ENCODE measurements at regions of chr15 and their contacts with region 1.

Region 1: DNA sequence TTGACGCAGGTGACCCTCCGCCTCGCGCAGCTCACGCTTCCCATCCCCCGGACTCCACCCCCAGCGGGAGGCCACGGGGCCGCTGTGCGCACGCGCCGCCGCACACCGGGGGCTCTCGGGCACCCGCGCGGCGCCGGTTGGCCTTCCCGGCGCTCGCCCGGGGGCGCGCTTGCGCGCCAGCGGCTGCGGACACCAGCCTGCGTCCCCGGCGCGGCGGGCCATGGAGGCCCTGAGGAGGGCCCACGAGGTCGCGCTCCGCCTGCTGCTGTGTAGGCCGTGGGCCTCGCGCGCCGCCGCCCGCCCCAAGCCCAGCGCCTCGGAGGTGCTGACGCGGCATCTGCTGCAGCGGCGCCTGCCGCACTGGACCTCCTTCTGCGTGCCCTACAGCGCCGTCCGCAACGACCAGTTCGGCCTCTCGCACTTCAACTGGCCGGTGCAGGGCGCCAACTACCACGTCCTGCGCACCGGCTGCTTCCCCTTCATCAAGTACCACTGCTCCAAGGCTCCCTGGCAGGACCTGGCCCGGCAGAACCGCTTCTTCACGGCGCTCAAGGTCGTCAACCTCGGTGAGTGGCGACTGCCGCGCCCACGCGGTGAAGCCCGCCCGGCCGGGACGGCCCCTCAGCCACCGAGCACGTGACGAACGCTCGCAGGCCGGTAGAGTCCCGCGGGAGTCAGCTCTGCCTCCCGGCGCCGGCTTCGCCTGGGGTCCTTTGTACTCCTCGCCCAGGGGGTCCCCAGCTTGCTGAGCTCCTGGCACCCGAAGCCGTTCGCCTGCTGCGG is at the start of gene C15orf61:
- DNase-seq: peak; percentile 62 to 79 (median 73)
- H3K4me3 ChIP-seq: peak within 1 kb of the TSS; percentile 66 to 88 (median 67)
- H3K4me3 Mint-ChIP-seq: peak within 1 kb of the TSS; percentile 91 to 92
- H3K27ac ChIP-seq: peak within 1 kb of the TSS; percentile 90 to 98
- H3K27ac Mint-ChIP-seq: peak within 1 kb of the TSS; percentile 95 to 97 (median 96)
- H3K4me1 ChIP-seq: peaks cover 26 to 44% of the 10 kb centered on the region in 2 donors
- H3K4me1 Mint-ChIP-seq: peaks cover 28% of the 10 kb centered on the region
- H3K27me3 ChIP-seq: no peaks in the 10 kb centered on the region
- H3K27me3 Mint-ChIP-seq: no peaks in the 10 kb centered on the region
- CTCF ChIP-seq: no peak
- polyA plus RNA-seq, gene C15orf61: 3.2 to 3.9 (median 3.6) TPM

Region 2: DNA sequence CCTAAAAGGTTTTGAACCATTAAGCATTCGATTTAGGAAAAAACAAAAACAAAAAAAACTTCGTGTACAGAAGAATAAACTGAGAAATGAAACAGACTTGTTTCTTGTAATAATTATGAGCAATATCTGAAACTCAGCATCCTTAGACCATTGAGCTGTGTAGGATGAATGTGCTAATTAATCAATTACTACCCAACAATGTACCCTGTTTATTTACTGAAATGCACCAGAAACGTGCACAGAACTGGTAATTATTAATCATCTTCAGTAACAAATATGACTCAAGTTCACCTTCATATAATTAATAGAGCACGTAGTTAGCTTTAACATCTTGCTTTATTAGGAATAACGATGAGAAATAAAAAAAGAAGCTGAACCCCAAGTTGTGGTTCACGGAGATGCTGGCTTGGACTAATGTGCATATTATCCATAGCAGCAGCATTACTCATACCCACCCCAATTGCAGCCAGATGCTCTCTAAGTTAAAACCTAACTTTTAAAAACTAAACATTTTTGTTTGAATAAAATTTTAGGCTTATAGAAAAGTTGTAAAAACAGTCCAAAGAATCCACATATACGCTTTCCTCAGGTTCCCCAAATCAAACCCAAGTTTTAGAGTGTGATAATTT is 10.5 kb before region 1 on chr15:
- intact Hi-C with region 1: no loop called
- DNase-seq: no peak
- H3K4me3 ChIP-seq: no peak overlapping the region
- H3K4me3 Mint-ChIP-seq: no peak overlapping the region
- H3K27ac ChIP-seq: no peak overlapping the region
- H3K27ac Mint-ChIP-seq: no peak overlapping the region
- H3K4me1 ChIP-seq: peaks cover 20 to 21% of the 10 kb centered on the region in 2 donors
- H3K4me1 Mint-ChIP-seq: peaks cover 27% of the 10 kb centered on the region
- H3K27me3 ChIP-seq: no peaks in the 10 kb centered on the region
- H3K27me3 Mint-ChIP-seq: no peaks in the 10 kb centered on the region
- CTCF ChIP-seq: no peak

Region 3: DNA sequence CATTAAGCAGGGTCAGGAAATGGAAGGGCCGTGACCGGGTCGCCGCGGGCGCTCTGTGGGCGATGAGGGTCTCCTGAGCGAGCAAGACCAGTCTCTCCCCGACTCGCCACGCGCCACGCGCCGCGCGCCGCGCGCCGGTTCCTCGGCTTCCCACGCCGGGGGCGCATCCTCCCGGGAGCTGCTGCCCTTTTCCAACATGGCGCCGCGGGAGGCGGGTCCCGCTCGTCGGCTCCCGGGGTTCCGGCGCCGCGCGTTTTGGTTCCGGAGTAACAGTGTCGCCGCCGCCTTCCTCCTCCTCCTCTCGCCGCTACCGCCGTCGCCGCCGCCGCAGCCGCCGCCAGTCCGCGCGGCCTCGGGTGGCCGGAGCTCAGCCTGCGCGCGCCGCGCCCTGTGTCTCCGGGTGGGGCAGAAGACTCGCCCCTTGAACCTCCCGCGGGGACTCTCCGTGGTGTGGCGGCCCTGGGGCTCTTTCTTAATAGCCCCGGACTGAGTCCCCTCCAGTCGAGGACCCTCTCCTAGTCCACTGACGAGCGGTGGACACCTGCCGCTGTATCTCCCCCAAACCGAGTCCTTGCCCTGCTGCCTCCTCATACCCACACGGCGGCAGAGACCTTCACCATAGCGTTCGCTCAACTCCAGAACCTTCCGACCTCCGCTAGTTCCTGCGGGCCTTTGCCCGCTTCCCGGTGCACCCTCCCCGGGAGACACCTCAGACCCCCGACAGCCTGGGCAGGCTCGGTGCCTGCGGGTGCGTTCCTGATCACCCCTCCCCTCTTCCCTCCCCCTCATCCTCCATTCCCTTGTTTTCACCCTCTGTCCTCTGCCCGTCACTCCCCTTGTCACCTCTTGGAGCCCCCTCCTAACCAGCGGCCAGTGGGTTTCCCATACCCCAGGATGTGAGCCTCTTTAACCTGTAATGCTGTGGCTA is 21.5 kb after region 1 on chr15 and contains the start of gene MAP2K5:
- intact Hi-C with region 1: loop called in 1 of 2 experiments (anchors 2 kb)
- DNase-seq: peak; percentile 67 to 77 (median 72)
- H3K4me3 ChIP-seq: peak within 1 kb of the TSS; percentile 94 to 99 (median 98)
- H3K4me3 Mint-ChIP-seq: peak within 1 kb of the TSS; percentile 96 to 97
- H3K27ac ChIP-seq: peak within 1 kb of the TSS; percentile 77 to 91
- H3K27ac Mint-ChIP-seq: peak within 1 kb of the TSS; percentile 87 to 97 (median 92)
- H3K4me1 ChIP-seq: peaks cover 19 to 41% of the 10 kb centered on the region in 2 donors
- H3K4me1 Mint-ChIP-seq: peaks cover 44% of the 10 kb centered on the region
- H3K27me3 ChIP-seq: no peaks in the 10 kb centered on the region
- H3K27me3 Mint-ChIP-seq: peaks cover 0 to 1% (median 0%) of the 10 kb centered on the region in 3 donors
- CTCF ChIP-seq: no peak
- polyA plus RNA-seq, gene MAP2K5: 10.2 to 11.3 (median 10.6) TPM

Region 4: DNA sequence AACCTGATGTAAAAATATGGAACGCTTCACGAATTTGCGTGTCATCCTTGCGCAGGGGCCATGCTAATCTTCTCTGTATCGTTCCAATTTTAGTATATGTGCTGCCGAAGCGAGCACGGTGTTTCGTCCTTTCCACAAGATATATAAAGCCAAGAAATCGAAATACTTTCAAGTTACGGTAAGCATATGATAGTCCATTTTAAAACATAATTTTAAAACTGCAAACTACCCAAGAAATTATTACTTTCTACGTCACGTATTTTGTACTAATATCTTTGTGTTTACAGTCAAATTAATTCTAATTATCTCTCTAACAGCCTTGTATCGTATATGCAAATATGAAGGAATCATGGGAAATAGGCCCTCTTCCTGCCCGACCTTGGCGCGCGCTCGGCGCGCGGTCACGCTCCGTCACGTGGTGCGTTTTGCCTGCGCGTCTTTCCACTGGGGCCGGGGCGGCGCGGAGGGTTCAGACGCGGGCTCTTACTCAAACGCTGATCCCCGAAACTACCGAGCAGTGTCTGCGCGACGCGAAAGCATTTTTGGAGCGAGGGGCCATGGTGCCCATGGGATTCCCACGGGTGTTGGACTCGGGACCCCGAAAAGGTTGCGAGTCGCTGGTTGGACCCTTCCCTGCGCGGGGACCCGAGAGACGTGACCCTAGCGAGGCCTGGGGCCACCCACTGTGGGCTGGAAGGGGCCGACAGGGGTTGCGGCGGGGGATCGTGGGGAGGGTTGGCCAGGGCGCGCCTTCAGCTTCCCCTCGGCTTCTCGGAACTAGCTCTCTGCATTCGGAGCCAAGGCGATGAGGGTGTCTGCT is 318.9 kb after region 1 on chr15 and contains the start of gene RNU6-1:
- intact Hi-C with region 1: loop called (anchors 10 kb)
- DNase-seq: peak; percentile 91 to 96 (median 94)
- H3K4me3 ChIP-seq: peak within 1 kb of the TSS; percentile 75 to 83 (median 82)
- H3K4me3 Mint-ChIP-seq: peak within 1 kb of the TSS; percentile 89 to 95
- H3K27ac ChIP-seq: peak within 1 kb of the TSS; percentile 92 to 95
- H3K27ac Mint-ChIP-seq: peak within 1 kb of the TSS; percentile 91 to 98 (median 96)
- H3K4me1 ChIP-seq: peaks cover 32 to 53% of the 10 kb centered on the region in 2 donors
- H3K4me1 Mint-ChIP-seq: peaks cover 44% of the 10 kb centered on the region
- H3K27me3 ChIP-seq: peaks cover 6 to 15% of the 10 kb centered on the region in 2 donors
- H3K27me3 Mint-ChIP-seq: peaks cover 15 to 26% (median 23%) of the 10 kb centered on the region in 3 donors
- CTCF ChIP-seq: no peak
- polyA plus RNA-seq, gene RNU6-1: not detected

Measured in CD14-positive monocyte (primary cell).